GM13977 (cell line): ENCODE measurements at regions of chr17 and their contacts with region 1.

Region 1: DNA sequence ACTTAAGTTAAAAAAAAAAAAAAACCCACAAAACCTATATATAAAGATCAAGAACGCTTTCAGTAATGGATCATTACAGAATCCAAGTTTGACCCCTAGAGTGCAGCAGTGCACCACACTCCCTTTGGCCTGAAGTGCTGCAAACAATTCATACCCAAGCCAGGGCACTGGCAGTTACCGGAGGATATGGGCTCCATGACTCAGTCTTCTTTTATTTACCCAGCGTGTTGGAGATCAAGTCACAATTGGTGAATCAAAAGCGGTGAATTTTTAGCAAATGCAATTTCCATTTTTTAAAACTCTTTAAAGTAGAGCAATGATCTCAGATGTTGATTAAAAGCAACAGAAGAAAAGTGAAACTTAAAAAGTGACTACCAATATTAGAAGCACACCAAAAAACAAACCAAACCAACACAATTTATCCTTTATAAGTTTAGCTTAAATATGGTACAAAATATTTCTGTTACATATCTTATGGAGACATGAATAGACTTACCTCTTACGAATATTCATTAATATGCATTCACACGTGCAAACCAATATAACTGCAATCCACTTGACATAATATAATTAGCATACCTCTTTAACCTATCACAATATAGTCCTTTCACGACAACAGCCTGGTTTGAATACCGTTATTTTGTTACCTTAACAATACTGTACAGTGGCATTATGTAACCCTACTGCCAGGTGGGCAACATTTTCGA is 46.3 kb downstream of the ZNF652 start:
- DNase-seq: peak; percentile 77
- CTCF ChIP-seq: peak; percentile 71

Region 2: DNA sequence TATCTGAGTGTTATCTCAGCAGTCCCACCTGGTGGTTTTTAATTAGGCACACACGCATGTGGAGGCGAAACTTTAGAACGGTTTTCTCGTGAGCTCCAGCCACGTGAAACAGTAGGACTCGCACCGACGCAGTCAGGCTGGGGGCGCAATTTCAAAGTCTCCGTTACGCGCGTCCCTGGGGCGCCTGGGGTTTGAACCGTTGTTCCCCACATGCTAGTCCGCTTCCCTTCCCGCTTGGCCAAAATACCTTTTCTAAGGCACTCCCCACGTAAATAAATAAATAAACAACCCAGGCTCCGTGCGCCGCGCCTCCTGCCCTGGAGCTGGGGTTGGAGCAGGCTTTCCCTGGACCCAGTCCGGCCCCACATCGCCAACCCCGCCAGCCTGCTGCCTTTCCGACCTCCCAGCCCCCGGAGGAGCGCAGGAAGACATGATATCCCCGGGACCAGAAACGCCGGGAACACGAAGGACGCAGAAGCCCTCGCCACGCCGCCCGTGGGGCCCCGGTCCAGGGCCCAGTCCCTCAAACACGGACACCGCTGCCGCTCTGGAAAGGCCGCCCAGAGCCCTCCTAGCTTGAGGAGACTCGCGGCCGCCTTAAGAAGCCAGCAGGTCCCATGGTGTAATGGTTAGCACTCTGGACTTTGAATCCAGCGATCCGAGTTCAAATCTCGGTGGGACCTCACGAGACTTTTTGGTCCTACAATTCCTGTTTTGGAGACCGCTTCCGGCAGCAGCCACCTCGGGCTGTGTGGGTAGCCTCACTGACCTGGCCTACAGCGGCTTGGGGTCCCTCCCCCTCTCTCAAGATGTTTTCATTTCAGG is 123.6 kb before region 1 on chr17:
- in situ Hi-C with region 1: no loop called
- DNase-seq: peak; percentile 63
- CTCF ChIP-seq: peak; percentile 51

Region 3: GRCh38 chr17:49249292-49249794 is 66.4 kb before region 1 on chr17:
- in situ Hi-C with region 1: no loop called
- DNase-seq: no peak
- CTCF ChIP-seq: no peak

Region 4: DNA sequence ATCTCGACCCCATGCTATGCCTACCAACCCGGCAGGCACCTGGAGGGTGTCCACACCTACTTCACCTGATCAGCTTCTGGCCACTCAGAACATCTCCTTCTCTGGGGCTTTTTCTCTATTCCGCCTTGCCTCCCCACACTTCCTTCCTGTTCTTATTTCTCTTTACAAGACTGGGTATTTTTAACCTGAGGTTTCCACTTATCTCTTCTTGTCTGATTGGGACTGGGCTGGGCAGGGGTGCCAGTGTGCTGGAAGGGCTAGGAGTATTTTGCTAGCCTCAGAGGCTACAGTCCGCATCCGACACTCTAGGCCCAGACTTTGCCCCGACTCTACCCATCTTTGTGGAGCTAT is 72.6 kb after region 1 on chr17:
- in situ Hi-C with region 1: loop called (anchors 10 kb)
- DNase-seq: no peak
- CTCF ChIP-seq: no peak

Region 5: DNA sequence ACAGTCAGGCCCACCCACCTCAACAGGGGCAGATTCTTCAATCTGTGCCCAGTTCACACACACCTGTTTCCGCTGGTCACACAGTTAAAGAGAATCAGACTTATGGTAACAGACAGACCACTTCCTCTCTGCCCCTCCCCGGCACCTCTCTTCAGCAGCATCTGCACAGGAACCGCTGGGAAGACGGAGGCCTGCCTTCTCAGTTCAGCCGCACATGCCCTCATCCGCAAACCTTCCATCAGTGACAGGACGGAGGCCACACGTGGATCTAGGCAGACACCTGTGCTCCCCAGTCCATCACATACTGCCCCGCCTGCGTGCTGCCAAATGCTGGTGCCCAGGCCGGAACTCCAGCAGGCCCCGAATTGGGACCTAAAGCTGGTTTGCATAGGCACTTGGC is 88.7 kb after region 1 on chr17:
- in situ Hi-C with region 1: loop called (anchors 5 kb)
- DNase-seq: no peak
- CTCF ChIP-seq: no peak